ENCODE measurements at regions of chr9 and their contacts with region 1.

Region 1: DNA sequence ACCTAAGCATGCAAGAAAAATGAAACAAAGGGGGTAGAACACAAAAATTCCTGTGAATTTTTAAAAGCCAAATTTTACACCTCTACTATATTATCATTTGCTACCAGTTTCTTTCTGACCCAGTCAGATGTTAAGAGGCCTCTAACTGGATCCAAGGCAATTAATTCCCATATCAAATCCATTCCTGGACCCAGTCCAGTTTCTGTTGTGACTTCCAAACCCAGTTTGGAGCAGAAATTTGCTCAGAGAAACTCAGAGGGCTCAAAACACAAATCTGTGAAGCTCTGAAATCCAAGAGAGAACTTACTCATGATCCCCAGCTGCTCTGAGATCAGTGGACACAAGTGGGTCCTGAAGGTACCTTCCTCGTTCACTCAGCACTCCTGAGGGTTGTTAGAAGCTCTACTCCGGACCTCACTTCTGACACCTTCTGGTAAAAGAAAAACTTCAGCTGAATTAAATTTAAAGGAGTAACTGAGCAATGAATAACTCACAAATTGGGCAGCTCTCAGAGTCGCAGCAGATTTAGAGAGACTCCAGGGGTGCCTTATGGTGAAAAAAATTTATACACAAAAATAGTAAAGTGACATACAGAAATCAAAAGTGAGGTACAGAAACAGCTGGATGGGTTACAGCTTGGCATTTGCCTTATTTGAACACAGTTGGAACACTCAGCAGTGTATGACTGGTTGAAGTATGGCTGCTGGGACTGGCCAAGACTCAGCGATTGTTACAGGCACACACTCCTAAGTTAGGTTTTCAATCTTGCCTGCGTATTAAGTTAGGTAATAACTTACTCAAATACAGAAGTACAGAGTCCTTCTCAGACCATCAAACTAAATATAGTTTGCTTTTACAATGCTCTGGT is 32.4 kb downstream of the INSL4 start:
- DNase-seq: no peak
- ATAC-seq: no peak
- H3K4me3 ChIP-seq: no peak overlapping the region
- H3K27ac ChIP-seq: no peak overlapping the region
- H3K4me1 ChIP-seq: peaks cover 0 to 2% of the 10 kb centered on the region in 2 donors
- H3K27me3 ChIP-seq: no peaks in the 10 kb centered on the region

Region 2: DNA sequence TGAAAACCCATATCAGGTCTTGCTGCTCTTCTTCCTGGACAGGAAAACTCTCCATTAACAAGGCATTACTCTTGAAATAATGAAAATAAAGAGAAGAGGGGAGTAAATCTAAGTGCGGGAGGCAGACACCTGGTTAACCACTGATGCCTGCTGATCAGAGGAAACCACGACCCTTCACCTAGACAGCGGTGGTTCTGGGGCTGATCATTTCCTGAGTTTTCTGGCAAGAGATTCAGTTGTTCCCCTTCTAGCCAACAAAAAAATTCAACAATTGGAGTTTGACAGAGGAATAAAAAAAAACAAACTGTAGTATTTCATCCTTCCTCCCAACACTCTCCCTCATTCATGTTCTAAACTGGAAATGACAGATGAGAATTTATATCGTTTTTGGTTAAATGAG is 38.0 kb after region 1 on chr9:
- intact Hi-C with region 1: no loop called
- DNase-seq: no peak
- ATAC-seq: no peak
- H3K4me3 ChIP-seq: no peak overlapping the region
- H3K27ac ChIP-seq: no peak overlapping the region
- H3K4me1 ChIP-seq: no peaks in the 10 kb centered on the region
- H3K27me3 ChIP-seq: no peaks in the 10 kb centered on the region

Region 3: DNA sequence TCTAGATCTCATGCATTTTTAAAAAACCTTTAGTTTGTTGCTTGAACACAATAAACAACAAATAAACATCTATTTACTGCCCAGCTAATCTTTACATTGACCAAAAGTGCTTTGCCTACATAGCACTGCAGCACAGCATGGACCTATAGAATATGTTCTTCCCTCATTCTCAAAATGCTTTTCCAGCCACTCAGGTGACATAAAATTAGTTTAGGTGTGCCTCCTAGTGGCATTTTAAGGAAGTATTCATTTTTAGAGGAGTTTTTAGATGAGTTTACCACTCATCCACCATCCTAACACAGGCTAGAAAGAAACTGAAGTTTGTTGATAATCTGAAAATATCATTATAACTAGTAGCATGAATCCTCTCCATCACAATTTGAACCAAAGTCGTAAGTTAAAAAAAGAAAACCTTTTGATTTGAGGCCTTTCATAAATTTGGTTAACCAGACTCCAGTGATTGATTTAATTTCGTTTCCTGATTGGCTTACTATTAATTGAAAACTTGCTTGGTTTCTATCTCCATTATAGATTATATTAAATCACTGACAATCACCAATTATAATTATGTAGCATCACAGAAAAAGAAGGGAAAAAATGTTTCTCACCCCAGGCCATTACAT is 161.5 kb after region 1 on chr9:
- intact Hi-C with region 1: loop called in 1 of 2 experiments (anchors 10 kb)
- DNase-seq: no peak
- ATAC-seq: no peak
- H3K4me3 ChIP-seq: no peak overlapping the region
- H3K27ac ChIP-seq: no peak overlapping the region
- H3K4me1 ChIP-seq: no peaks in the 10 kb centered on the region
- H3K27me3 ChIP-seq: no peaks in the 10 kb centered on the region